ENCODE measurements at regions of chr3 and their contacts with region 1.

Region 1: DNA sequence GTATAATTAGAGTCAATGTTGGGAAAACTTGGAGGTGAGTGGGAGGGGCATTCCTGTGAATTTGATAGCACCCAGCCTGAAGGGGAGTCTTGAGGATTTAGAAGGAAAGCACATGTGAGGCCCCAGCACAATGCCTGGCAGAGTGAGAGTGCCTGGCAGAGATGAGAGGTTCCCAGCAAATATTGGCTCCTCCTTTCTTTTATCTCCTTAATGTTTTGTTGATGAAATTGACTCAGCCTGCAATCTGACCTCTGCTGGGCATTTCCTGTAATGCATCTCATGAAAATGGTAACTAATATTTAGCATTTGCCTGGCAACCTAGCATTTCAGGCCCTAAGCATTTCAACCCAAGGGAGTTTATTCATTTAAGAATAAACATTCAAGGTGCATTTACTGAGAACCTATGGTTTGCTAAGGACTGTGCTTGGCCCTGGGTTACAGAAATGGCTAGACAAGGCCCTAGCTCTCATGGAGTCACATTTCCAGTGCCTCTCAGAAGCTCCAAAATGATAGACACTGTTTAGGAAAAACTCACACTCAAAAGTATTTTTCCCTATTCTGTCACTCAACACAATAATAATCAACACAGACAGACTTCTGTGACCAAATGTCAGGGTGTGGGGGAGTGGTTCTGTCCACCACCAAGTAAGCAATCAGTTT is 19.0 kb downstream of the PDHB start:
- DNase-seq: no peak
- H3K4me3 ChIP-seq: no peak overlapping the region
- H3K27ac ChIP-seq: no peak overlapping the region
- H3K27me3 ChIP-seq: no peaks in the 10 kb centered on the region
- CTCF ChIP-seq: peak; percentile 83

Region 2: GRCh38 chr3:58324391-58325390 is 90.0 kb before region 1 on chr3:
- CTCF ChIA-PET with region 1: interaction called, 53 read pairs
- POLR2A ChIA-PET with region 1: no interaction called
- DNase-seq: no peak
- H3K4me3 ChIP-seq: no peak overlapping the region
- H3K27ac ChIP-seq: no peak overlapping the region
- H3K27me3 ChIP-seq: no peaks in the 10 kb centered on the region
- CTCF ChIP-seq: no peak

Region 3: GRCh38 chr3:58404396-58404795 is 10.3 kb before region 1 on chr3:
- CTCF ChIA-PET with region 1: interaction called, 12 read pairs
- POLR2A ChIA-PET with region 1: no interaction called
- DNase-seq: no peak
- H3K4me3 ChIP-seq: no peak overlapping the region
- H3K27ac ChIP-seq: no peak overlapping the region
- H3K27me3 ChIP-seq: no peaks in the 10 kb centered on the region
- CTCF ChIP-seq: no peak